ENCODE measurements at regions of chr13 and their contacts with region 1.

Region 1: DNA sequence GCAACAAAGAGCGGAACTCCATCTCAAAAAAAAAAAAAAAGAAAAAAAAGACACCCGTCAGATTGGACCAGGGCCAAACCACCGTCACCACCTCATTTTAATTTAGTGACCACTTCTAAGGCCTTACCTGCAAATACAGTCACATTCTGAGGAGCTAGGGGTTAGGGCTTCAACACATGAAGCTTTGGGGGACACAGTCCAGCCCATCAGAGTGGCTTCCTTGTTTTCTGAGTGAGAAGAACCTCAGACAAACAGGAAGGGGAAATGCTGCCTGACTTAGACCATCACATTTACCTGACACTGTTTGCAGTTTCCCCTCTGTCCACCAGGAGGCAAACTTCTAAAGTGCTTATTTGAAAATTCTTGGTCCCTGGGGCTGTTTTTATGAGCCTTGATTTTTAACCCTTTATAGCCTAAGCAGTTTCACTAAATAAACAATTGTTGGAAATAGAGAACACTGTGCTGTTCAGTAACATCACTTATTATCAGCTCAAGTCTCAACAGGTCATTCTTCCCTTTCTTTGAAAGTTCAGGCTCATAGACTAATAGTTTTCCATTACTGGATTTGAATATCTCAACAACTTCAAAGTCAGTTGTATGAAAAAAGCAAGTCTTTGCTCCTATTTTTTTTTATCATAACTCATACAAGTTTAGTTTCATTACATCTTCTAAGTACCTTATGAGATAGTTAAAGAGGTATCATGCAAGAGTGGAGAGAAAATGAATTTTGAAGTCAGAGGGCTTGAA is 74.9 kb upstream of the WASF3 start:
- DNase-seq: peak in 4 of 5 donors; percentile 71 to 90 (median 82)
- H3K4me3 ChIP-seq: peak overlapping the region; percentile 31 to 59 (median 52)
- H3K27ac ChIP-seq: no peak overlapping the region
- H3K4me1 ChIP-seq: no peaks in the 10 kb centered on the region
- H3K27me3 ChIP-seq: no peaks in the 10 kb centered on the region
- CTCF ChIP-seq: peak; percentile 87

Region 2: DNA sequence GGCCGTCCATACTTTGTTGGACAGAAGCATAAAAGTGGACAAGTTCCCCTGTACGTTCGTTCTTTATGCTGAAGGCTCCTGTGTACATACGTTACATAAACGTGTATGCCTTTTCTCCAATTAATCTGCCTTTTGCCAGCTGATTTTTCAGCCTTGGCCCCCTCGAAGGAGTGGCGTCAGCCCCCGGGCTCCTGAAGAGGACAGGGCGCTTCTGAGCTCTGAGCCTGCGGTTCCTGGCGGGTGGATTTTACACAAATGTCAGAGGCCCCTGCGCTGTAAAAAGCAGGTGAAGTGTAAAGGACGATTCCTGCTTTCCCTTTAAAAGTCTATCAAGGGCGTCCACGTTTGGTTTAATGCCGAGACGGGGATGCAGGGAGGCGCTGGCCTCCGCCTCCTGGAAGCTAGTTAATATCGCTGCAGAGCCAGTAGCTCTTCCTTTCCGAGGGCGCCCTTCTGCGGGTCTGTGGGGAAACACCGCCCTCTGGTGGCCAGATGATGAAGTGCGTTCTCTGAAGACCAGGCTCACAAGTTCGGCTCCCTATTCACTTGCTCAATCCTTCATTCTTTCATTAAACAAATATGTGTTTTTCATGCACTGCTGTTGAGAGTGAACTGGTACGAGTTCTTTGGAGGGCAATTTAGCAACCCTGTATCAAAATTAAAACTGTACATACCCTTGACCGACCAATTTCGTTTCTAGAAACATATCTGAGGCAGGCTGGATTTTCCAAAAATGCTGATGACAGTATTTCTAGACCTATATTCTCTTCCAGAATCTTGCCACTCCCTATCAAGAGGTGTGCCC is 216.0 kb after region 1 on chr13:
- intact Hi-C with region 1: loop called (anchors 10 kb)
- DNase-seq: peak; percentile 89 to 94 (median 91)
- H3K4me3 ChIP-seq: peak overlapping the region in 2 of 3 donors; percentile 13 to 40
- H3K27ac ChIP-seq: no peak overlapping the region
- H3K4me1 ChIP-seq: peaks cover 0 to 3% (median 2%) of the 10 kb centered on the region in 3 donors
- H3K27me3 ChIP-seq: no peaks in the 10 kb centered on the region
- CTCF ChIP-seq: peak; percentile 98

Measured in kidney (tissue), 22 donors.